Endothelial cell of umbilical vein (primary cell): ENCODE measurements at regions of chr14 and their contacts with region 1.

Region 1: GRCh38 chr14:99729991-99730868 is 46.1 kb downstream of the CYP46A1 start:
- DNase-seq: peak; percentile 58
- H3K4me3 ChIP-seq: peak overlapping the region; percentile 15 to 58 (median 38)
- H3K27ac ChIP-seq: peak overlapping the region; percentile 17
- H3K4me1 ChIP-seq: peaks cover 22% of the 10 kb centered on the region
- H3K27me3 ChIP-seq: no peaks in the 10 kb centered on the region
- CTCF ChIP-seq: peak; percentile 86 to 94
- POLR2A ChIP-seq: no peak

Region 2: DNA sequence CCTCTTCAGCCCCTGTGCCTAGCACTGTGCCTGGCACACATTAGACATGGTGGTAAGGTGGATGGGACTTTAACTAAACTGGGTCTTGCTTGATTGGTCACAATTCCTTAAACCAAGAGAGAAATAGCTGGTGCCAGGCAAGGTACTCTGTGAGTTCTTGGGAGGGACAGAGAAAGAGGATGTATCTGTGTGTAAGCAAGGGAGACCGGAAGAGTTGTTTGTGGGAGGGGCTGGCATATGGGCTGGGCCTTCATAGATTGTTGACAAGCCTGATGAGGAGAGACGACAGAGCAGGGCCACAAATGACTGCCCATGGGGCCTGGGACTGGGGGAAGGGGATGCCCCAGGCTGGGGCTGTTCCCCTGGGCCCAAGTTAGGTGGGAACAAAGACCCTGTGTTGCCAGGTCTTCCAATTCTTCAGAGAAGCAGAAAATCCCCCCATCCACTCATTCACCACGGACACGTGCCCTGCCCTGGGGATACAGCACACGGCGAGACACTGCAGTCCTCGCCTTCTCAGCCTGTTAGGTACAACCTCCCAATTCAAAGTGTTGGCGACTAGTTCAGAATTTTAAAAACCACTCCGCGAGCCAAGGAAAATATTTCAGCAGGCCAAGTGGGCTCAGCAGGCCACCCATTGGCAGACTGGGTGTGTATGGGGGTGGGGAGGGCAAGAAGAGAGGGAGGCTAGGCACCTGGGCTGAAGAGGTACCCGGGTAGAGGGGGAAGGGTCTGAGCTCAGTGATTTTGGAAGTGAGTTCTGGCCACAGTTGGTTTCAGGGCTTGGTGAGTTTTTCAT is 57.5 kb before region 1 on chr14:
- CTCF ChIA-PET with region 1: no interaction called
- POLR2A ChIA-PET with region 1: no interaction called
- dilution Hi-C with region 1: no loop called
- intact Hi-C with region 1: no loop called
- DNase-seq: no peak
- H3K4me3 ChIP-seq: no peak overlapping the region
- H3K27ac ChIP-seq: no peak overlapping the region
- H3K4me1 ChIP-seq: no peaks in the 10 kb centered on the region
- H3K27me3 ChIP-seq: peaks cover 10 to 15% of the 10 kb centered on the region in 2 experiments
- CTCF ChIP-seq: no peak
- POLR2A ChIP-seq: no peak

Region 3: DNA sequence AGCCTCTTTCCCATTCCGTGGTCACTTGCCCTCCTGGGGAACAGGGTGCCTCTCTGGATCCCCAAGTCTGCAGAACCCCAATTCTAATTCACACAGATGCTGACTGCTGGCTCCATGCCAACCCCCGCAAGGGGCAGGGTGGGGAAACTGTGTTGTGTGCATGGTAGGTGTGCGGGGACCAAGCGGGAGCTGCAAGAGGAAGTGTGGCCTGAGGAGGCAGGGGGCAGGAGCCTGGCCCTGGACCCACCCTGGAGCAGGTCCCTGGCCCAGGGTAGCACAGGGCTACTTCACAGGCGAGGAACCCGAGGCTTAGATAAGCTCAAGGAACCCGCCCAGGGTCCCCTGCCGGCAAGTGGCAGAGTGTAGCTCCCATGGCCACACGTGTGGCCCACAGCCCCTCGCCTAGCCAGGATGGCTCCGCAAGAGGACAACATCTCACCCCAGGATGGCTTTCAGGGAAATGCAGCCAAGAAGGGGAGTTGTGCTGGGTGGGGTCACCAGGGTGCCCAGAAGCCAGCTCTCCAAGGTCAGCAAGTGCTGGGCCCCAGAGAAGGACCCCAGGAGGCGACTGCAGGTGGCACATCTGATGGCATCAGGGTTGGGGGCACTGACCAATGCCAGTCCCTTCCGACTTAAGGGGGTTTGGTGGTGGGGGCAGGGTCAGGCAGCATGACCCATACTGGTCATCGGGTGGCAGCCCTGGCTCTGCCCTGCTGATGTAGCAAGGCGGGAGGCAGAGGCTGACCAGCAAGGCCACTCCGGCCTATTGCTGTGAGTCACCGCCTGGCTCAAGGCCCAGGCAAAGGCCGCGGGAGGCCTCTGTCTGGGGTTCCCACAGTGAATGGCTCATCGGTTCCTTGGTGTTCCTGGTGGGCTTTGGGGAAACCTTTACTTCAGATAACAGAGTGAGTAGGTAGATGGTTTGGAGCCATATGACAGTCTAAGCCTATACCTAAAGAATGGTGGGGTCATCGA is 25.7 kb after region 1 on chr14:
- CTCF ChIA-PET with region 1: interaction called, 26 read pairs
- POLR2A ChIA-PET with region 1: no interaction called
- dilution Hi-C with region 1: no loop called
- intact Hi-C with region 1: loop called (anchors 1 kb)
- DNase-seq: peak; percentile 93
- H3K4me3 ChIP-seq: no peak overlapping the region
- H3K27ac ChIP-seq: peak overlapping the region; percentile 83
- H3K4me1 ChIP-seq: peaks cover 81% of the 10 kb centered on the region
- H3K27me3 ChIP-seq: no peaks in the 10 kb centered on the region
- CTCF ChIP-seq: no peak
- POLR2A ChIP-seq: no peak

Region 4: GRCh38 chr14:99853206-99853605 is 123.0 kb after region 1 on chr14:
- CTCF ChIA-PET with region 1: interaction called, 11 read pairs
- POLR2A ChIA-PET with region 1: no interaction called
- dilution Hi-C with region 1: no loop called
- intact Hi-C with region 1: no loop called
- DNase-seq: no peak
- H3K4me3 ChIP-seq: no peak overlapping the region
- H3K27ac ChIP-seq: no peak overlapping the region
- H3K4me1 ChIP-seq: no peaks in the 10 kb centered on the region
- H3K27me3 ChIP-seq: no peaks in the 10 kb centered on the region
- CTCF ChIP-seq: no peak
- POLR2A ChIP-seq: no peak

Region 5: GRCh38 chr14:99884834-99885648 is 154.8 kb after region 1 on chr14:
- CTCF ChIA-PET with region 1: interaction called, 86 read pairs
- POLR2A ChIA-PET with region 1: no interaction called
- dilution Hi-C with region 1: no loop called
- intact Hi-C with region 1: loop called (anchors 1 kb)
- DNase-seq: peak; percentile 70
- H3K4me3 ChIP-seq: no peak overlapping the region
- H3K27ac ChIP-seq: no peak overlapping the region
- H3K4me1 ChIP-seq: no peaks in the 10 kb centered on the region
- H3K27me3 ChIP-seq: no peaks in the 10 kb centered on the region
- CTCF ChIP-seq: peak; percentile 44 to 57
- POLR2A ChIP-seq: no peak

Region 6: DNA sequence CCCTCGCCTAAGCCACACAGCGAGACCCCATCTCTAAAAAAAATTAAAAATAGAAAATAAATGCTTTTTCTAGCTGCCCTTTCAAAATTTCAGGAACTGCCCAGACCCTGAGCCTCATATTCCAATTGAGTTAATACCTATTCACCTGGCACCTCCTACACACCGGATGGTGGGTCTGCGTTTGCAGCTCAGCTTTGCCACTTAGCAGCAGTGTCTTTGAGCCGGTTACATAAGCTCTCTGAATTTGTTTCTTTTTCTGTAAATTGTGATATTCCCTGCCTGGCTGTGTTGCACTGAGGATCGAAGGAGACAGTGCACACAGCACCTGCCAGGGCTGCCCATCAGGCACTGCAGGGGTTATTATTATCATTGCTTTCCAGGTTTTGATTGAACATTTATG is 188.6 kb after region 1 on chr14:
- CTCF ChIA-PET with region 1: no interaction called
- POLR2A ChIA-PET with region 1: no interaction called
- dilution Hi-C with region 1: no loop called
- intact Hi-C with region 1: no loop called
- DNase-seq: no peak
- H3K4me3 ChIP-seq: no peak overlapping the region
- H3K27ac ChIP-seq: no peak overlapping the region
- H3K4me1 ChIP-seq: no peaks in the 10 kb centered on the region
- H3K27me3 ChIP-seq: no peaks in the 10 kb centered on the region
- CTCF ChIP-seq: no peak
- POLR2A ChIP-seq: no peak